ENCODE measurements at regions of chr16 and their contacts with region 1.

Region 1: GRCh38 chr16:56425439-56425832 is at the start of gene AMFR:
- DNase-seq: peak; percentile 80
- ATAC-seq: peak; percentile 96
- H3K4me3 ChIP-seq: peak within 1 kb of the TSS; percentile 93
- H3K27ac ChIP-seq: peak within 1 kb of the TSS; percentile 84
- H3K4me1 ChIP-seq: peaks cover 11% of the 10 kb centered on the region
- H3K27me3 ChIP-seq: no peaks in the 10 kb centered on the region
- CTCF ChIP-seq: peak; percentile 51
- POLR2A ChIP-seq: no peak; the same call in 1 of the 2 replicates
- RAD21 ChIP-seq: peak; percentile 22; the same call in 1 of the 2 replicates
- total RNA-seq, gene AMFR: 215 and 216 TPM in 2 replicates

Region 2: GRCh38 chr16:56332464-56333079 is 92.9 kb before region 1 on chr16:
- CTCF ChIA-PET with region 1: no interaction called
- POLR2A ChIA-PET with region 1: no interaction called
- dilution Hi-C with region 1: no loop called
- in situ Hi-C with region 1: no loop called
- intact Hi-C with region 1: loop called (anchors 1 kb)
- DNase-seq: peak; percentile 45
- ATAC-seq: peak; percentile 93
- H3K4me3 ChIP-seq: no peak overlapping the region
- H3K27ac ChIP-seq: no peak overlapping the region
- H3K4me1 ChIP-seq: no peaks in the 10 kb centered on the region
- H3K27me3 ChIP-seq: peaks cover 2% of the 10 kb centered on the region; the same call in 1 of the 2 replicates
- CTCF ChIP-seq: peak; percentile 47
- POLR2A ChIP-seq: no peak
- RAD21 ChIP-seq: peak; percentile 52